ENCODE measurements at regions of chr3 and their contacts with region 1.

Region 1: DNA sequence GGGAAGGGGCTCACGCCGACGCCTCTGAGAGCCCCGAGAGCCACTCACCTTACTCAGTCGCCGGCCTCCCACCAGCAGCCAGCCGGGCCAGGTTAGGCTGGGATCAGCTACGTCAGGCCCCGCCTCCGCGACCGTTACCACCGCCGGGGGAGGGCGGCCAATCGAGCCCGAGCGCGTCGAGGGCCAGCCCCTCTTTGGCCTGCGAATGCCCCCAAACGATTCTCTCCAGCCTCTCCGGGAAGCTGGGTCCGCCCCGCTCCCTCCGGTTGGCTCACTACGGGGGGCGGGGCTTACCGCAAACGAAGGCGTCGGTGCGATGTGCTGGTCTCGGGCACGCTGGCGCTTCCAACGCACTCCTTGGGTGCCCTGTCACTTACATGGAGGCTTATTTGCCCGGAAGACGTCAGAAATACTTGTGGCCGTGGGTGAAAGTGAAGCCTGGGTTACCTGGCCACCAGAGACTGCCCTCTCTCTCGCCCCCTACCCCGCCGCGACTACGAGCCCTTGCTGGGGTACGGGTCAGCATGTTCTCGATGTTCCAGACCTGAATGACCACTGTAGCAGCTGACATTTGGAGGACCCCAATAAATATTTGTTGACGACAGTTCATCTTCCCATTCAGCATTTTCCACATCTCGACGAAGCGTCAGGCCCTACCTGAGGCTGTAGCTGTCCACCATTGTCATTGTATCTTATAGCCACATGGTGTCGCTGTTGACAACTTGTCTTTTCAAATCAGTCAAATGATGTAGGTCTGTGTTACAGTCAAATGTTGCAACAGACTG is at the start of gene CEP70:
- DNase-seq: peak; percentile 90
- H3K4me3 Mint-ChIP-seq: peak within 1 kb of the TSS; percentile 96
- H3K27ac Mint-ChIP-seq: peak within 1 kb of the TSS; percentile 87
- H3K4me1 Mint-ChIP-seq: peaks cover 4% of the 10 kb centered on the region
- H3K27me3 Mint-ChIP-seq: no peaks in the 10 kb centered on the region
- total RNA-seq, gene CEP70: 16.3 to 20.4 TPM

Region 2: GRCh38 chr3:138180375-138181029 is 413.8 kb before region 1 on chr3:
- CTCF ChIA-PET with region 1: no interaction called
- intact Hi-C with region 1: loop called (anchors 1 kb)
- DNase-seq: peak; percentile 76
- H3K4me3 Mint-ChIP-seq: no peak overlapping the region
- H3K27ac Mint-ChIP-seq: no peak overlapping the region
- H3K4me1 Mint-ChIP-seq: peaks cover 3% of the 10 kb centered on the region
- H3K27me3 Mint-ChIP-seq: peaks cover 1% of the 10 kb centered on the region

Region 3: GRCh38 chr3:138479438-138479863 is 114.9 kb before region 1 on chr3:
- CTCF ChIA-PET with region 1: interaction called, 9 read pairs
- intact Hi-C with region 1: loop called (anchors 1 kb)
- DNase-seq: peak; percentile 65
- H3K4me3 Mint-ChIP-seq: no peak overlapping the region
- H3K27ac Mint-ChIP-seq: no peak overlapping the region
- H3K4me1 Mint-ChIP-seq: no peaks in the 10 kb centered on the region
- H3K27me3 Mint-ChIP-seq: no peaks in the 10 kb centered on the region

Region 4: DNA sequence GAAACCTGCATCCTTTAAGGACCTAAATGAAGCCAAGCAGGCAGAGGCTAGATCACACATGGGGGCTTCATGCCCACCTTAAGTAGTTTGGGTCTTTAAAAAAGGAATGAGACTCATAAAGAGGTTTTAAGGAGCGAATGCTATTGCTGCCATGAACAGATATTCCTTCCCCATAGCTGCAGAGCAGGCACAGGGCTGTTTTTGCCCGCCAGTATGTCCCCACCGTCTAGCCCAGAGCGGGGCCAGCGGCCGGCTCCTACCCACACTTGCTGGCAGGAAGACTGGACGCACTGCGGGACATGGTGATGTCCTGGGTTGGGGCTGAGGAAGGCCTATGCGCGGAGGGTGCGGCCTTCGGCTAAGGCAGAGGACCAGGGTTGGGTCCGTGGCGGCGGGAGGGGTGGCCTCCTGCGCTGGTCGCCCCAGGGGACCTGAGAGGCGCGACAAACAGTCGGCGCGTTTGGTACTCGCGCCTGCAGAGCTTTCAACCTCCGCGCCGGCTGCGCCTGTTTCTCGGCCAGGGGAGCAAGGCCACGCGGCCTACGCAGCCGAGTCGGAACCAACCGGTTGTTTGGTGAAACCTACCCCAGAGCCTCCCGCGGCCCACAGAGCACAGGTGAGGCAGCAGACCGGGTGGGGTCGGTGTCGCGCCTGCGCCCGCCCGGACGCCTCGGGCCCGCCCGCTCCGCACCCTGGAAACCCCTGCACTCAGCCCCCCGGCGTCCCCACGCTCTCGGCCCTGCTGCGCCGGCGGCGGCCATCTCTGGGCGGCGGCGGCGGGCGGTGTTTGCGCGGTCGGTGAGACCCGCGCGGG is 14.2 kb after region 1 on chr3 and contains the start of gene FAIM:
- CTCF ChIA-PET with region 1: interaction called, 11 read pairs
- intact Hi-C with region 1: loop called (anchors 1 kb)
- DNase-seq: peak; percentile 64
- H3K4me3 Mint-ChIP-seq: peak within 1 kb of the TSS; percentile 73
- H3K27ac Mint-ChIP-seq: peak within 1 kb of the TSS; percentile 79
- H3K4me1 Mint-ChIP-seq: peaks cover 10% of the 10 kb centered on the region
- H3K27me3 Mint-ChIP-seq: no peaks in the 10 kb centered on the region
- total RNA-seq, gene FAIM: 2.2 to 3.4 TPM

Region 5: DNA sequence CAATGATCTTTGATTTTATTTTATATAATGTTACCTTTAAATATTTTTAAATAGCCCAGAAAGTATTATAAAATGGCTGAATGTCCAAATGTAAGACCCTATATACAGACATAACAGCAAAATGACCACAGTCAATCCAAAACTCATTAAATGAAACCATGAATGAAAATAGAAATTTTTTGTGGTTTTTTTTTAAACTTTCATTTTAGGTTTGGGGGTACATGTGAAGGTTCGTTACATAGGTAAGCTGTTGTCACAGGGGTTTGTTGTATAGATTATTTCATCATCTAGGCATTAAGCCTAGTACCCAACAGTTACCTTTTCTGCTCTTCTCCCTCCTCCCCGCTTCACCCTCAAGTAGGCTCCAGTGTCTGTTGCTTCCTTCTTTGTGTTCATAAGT is 123.0 kb after region 1 on chr3:
- CTCF ChIA-PET with region 1: no interaction called
- intact Hi-C with region 1: no loop called
- DNase-seq: no peak
- H3K4me3 Mint-ChIP-seq: no peak overlapping the region
- H3K27ac Mint-ChIP-seq: no peak overlapping the region
- H3K4me1 Mint-ChIP-seq: peaks cover 31% of the 10 kb centered on the region
- H3K27me3 Mint-ChIP-seq: no peaks in the 10 kb centered on the region

Region 6: GRCh38 chr3:138774529-138775253 is 180.3 kb after region 1 on chr3:
- CTCF ChIA-PET with region 1: no interaction called
- intact Hi-C with region 1: loop called (anchors 2 kb)
- DNase-seq: peak; percentile 62
- H3K4me3 Mint-ChIP-seq: no peak overlapping the region
- H3K27ac Mint-ChIP-seq: peak overlapping the region; percentile 59
- H3K4me1 Mint-ChIP-seq: peaks cover 42% of the 10 kb centered on the region
- H3K27me3 Mint-ChIP-seq: no peaks in the 10 kb centered on the region

Region 7: DNA sequence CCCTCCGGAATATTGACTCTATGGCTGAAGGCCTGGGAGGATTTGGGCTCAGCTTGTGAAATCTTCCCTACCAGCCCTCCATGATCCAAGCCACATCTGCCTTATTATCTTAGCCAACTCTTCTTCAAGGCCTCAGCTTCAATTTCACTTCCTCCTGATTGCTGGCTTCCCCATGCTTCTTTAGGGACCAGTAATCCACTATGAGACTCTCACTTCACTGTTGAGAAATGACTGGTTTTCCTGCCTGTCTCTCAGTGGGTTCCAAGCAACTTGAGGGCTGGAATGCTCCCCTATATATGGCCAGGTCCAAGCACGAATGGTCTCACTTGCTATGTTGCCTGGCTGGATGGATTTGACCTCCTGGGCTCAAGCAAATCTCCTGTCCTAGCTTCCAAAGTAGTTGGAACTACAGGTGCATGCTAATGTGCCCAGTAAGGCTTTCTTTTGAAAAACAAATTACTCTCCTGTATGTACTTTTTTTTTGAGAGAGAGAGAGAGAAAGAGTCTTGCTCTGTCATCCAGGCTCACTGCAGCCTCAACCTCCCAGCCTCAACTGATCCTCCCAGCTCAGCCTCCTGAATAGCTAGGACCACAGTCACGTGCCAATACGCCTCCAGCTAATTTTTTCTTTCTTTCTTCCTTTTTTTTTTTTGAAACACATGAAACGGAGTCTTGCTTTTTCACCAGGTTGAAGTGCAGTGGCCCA is 248.3 kb after region 1 on chr3:
- CTCF ChIA-PET with region 1: no interaction called
- intact Hi-C with region 1: no loop called
- DNase-seq: no peak
- H3K4me3 Mint-ChIP-seq: no peak overlapping the region
- H3K27ac Mint-ChIP-seq: no peak overlapping the region
- H3K4me1 Mint-ChIP-seq: no peaks in the 10 kb centered on the region
- H3K27me3 Mint-ChIP-seq: no peaks in the 10 kb centered on the region

Region 8: DNA sequence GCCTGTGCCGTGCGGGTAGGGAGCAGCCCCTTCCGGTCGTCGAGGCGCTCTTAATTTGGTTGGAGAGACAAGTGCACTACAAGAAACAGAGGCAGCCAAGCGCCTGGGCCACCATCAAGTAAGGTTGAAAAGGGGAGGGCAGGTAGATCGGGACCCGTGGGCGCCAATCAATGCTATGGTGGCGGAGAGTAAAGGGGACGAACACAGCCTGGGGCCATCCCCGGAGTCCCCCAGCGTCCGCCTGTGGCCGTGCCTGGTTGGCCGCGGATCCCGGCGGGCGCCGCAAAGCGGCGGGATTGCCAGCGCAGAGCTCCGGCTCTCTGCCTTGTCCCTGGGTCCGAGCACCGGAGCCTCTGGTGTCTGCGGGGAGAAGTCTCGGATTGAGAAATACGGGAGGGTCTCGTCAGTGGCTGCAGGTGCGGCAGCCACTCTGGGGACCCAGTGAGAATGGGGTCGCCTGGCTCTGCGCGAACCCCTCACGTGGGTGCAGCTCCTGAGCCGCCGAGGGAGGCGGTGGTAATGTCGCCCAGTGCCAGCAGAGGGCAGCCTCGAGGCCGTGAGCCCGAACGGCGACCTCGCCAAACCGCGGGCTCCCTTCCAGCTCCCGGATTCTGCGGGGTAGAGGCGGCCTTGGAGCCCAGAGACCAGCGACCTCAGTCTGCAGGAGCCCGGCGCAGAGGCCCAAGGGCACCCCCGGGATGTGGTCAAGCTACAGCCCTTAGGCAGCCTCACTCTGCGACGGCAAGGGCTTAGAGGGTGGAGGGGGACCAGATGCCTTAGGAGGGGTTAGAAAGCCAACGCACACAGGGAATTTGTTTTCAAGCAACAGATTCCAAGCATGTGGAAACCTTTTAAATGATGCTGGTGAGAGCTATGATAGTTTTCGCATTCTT is 341.8 kb after region 1 on chr3:
- CTCF ChIA-PET with region 1: interaction called, 17 read pairs
- intact Hi-C with region 1: loop called (anchors 1 kb)
- DNase-seq: peak; percentile 78
- H3K4me3 Mint-ChIP-seq: peak overlapping the region; percentile 71
- H3K27ac Mint-ChIP-seq: no peak overlapping the region
- H3K4me1 Mint-ChIP-seq: peaks cover 34% of the 10 kb centered on the region
- H3K27me3 Mint-ChIP-seq: peaks cover 70% of the 10 kb centered on the region

Measured in activated naive CD4-positive, alpha-beta T cell treated with anti-CD3 and anti-CD28 coated beads for 36 hours (primary cell).